Vagina (tissue), 2 donors: ENCODE measurements at regions of chr17 and their contacts with region 1.

Region 1: DNA sequence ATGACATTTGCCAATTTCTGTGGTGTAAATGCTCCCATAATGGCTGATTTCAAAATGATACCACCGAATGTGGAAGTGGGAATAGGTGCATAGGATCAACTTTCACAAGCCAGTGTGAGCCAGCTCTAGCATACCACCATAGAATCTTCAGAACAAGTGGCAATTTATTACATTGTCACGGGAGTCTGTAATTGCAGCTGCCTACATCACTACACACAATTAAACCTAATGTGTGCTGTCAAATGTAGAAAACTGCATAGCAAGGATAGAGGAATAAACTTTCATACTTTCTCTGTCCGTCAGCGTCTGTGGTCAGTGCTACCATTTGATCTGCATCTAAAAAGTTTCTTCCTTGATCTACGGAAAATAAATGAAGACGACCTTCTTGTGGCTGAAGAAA is 417.8 kb upstream of the TOM1L1 start:
- DNase-seq: no peak
- H3K4me3 ChIP-seq: no peak overlapping the region
- H3K27ac ChIP-seq: no peak overlapping the region
- H3K4me1 ChIP-seq: no peaks in the 10 kb centered on the region
- H3K27me3 ChIP-seq: no peaks in the 10 kb centered on the region
- CTCF ChIP-seq: no peak
- POLR2A ChIP-seq: no peak

Region 2: GRCh38 chr17:53543472-53543871 is 939.4 kb before region 1 on chr17:
- intact Hi-C with region 1: no loop called
- DNase-seq: no peak
- H3K4me3 ChIP-seq: no peak overlapping the region
- H3K27ac ChIP-seq: no peak overlapping the region
- H3K4me1 ChIP-seq: no peaks in the 10 kb centered on the region
- H3K27me3 ChIP-seq: no peaks in the 10 kb centered on the region
- CTCF ChIP-seq: no peak
- POLR2A ChIP-seq: no peak

Region 3: DNA sequence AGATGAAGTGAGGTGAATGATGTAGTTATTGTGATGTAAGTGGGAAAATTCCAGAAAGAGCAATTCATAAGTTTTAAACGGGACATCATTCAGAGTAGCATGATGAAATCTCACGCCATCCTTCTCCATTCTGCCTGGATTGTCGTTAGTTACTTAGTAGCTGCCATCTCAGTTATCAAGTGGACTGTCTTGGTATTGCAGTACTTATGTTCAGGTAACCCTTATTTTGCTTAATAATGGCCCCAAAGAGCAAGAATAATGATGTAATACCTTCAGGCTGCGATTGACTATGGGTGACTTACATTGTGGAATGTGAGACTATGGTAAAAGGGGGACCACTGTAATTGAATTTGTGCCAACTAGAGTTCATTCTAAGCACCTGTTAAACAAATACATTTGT is 183.7 kb after region 1 on chr17:
- intact Hi-C with region 1: no loop called
- DNase-seq: no peak
- H3K4me3 ChIP-seq: no peak overlapping the region
- H3K27ac ChIP-seq: no peak overlapping the region
- H3K4me1 ChIP-seq: no peaks in the 10 kb centered on the region
- H3K27me3 ChIP-seq: no peaks in the 10 kb centered on the region
- CTCF ChIP-seq: no peak
- POLR2A ChIP-seq: no peak

Region 4: DNA sequence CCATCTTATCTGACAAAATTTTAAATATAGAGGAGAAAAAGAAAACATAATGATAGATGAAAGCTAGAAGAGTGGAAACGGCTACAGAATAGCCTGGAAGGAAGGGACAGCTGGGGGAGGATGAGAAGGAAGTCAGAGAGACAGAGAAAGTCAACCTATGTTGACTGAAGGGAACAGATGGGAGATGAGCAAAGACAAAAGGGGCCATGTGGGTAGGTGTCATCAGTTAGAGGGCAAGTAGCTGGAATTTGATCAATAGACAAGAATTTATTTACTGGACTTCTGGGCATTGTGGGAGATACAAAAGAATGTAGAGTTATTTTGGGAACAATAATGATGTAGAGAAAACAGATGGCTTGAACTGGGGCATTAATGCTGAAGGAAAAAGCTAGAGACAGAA is 1864.8 kb after region 1 on chr17:
- intact Hi-C with region 1: loop called (anchors 5 kb)
- DNase-seq: no peak
- H3K4me3 ChIP-seq: no peak overlapping the region
- H3K27ac ChIP-seq: no peak overlapping the region
- H3K4me1 ChIP-seq: no peaks in the 10 kb centered on the region
- H3K27me3 ChIP-seq: no peaks in the 10 kb centered on the region
- CTCF ChIP-seq: no peak
- POLR2A ChIP-seq: no peak